GM10248 (cell line): ENCODE measurements at regions of chr17 and their contacts with region 1.

Region 1: DNA sequence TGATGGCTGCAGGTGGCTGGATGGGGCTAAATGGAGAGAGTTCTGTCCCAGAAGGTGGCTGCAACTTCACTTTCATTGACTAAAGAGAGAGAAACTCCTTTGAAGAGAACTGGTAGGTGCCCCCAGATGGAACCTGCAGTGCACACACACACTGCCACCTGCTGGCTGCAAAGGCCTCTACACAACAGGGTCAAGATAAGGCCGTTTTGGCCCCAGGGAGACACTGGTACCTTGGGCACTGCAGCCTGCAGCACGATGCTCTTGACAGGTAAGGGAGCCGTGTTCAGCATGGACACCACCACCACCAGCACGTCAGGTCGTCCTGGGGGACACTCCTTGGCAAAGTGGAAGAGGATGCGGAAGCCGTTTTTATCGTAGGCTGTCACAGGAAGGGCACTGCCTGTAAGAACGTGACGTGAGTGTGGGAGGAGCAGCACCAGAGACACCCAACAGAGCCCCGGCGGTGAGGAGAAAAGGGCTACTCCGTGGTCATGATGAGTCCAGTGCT is 22.7 kb downstream of the GGA3 start:
- DNase-seq: peak; percentile 82
- CTCF ChIP-seq: peak; percentile 84

Region 2: DNA sequence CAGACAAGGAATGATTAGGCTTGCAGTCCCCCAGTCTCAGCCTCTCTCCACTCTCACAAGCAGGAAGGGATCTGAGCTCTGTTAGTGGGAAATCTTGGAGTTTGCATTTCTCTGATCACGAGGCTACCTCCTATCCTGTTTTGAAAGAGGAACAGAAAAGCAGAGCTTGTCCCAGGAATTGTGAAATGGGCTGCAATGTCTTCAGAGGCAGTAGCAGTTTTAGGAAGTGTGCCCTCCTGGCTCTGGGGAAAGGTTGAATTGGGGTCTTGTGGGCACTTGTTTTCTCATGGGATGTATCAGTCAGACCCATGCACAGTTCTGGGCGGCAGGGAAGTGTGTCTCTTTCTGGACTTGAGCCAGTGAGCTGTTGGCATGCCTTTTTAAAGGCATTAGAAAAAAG is 10.4 kb before region 1 on chr17:
- CTCF ChIA-PET with region 1: interaction called, 87 read pairs
- POLR2A ChIA-PET with region 1: interaction called, 3 read pairs
- DNase-seq: no peak
- CTCF ChIP-seq: no peak

Region 3: DNA sequence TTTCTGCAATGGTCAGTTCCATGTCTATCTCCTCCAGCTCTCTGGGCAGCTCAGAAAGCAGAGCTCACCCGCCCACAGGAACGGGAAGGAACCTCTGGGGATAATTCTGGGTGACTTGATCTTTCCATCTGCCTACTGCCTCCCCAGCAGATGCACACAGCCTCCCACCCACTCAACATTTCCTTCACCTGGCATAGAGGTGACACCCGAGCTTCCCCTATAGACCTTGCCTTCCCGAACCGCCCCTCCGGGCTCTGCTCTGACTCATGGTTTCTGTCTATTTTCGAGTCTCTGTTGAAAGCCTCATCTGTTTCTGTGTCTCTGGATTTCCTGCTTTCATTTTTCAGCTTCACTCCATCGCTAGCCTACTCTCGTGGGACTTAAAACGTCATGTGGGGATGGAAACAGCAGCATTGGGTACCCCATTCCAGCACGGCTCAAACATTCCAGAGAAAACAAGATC is 11.3 kb after region 1 on chr17:
- CTCF ChIA-PET with region 1: interaction called, 21 read pairs
- POLR2A ChIA-PET with region 1: interaction called, 3 read pairs
- DNase-seq: peak; percentile 82
- CTCF ChIP-seq: no peak

Region 4: DNA sequence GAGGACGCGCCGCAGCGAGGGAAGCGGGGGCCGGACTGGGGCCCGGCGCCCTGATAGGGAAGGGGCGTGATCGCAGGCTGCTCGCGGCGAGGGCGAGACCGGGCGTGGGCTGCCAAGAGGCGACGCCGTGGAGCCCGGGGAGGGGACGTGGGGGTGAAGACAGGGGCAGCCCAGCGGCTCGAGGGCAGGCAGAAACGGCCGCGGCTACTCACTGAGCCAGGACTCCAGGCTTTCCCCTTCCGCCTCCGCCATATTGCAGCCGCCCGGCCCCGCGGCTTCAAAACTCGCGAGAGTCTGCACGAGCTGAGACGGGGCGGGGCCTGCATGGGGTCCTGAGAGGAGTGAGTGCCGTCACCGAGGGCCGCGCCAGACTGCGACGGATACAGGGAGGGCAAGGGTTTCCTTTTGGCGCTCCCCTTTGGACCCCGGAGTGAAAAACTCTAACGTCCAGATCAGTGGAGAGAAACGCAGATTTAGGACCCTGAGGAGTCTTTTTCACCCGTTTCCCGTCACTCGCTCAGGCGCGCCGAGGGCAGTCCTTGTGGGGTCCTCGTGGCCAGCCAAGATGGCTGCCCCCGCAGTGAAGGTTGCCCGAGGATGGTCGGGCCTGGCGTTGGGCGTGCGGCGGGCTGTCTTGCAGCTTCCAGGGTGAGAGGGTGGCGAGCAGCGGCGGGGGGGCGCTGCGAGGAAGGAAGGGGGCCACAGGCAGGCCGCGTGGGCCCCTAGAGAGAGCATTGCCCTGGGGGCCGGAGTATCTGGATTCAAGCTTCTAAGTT is 22.8 kb after region 1 on chr17 and contains the starts of genes GGA3 and MRPS7:
- CTCF ChIA-PET with region 1: interaction called, 15 read pairs
- POLR2A ChIA-PET with region 1: interaction called, 4 read pairs
- DNase-seq: peak; percentile 95
- CTCF ChIP-seq: no peak

Region 5: GRCh38 chr17:75309025-75309772 is 70.5 kb after region 1 on chr17:
- CTCF ChIA-PET with region 1: no interaction called
- POLR2A ChIA-PET with region 1: no interaction called
- DNase-seq: no peak
- CTCF ChIP-seq: no peak